Activated CD4-positive, alpha-beta T cell treated with anti-CD3 and anti-CD28 coated beads for 36 hours (primary cell): ENCODE measurements at regions of chr15 and their contacts with region 1.

Region 1: DNA sequence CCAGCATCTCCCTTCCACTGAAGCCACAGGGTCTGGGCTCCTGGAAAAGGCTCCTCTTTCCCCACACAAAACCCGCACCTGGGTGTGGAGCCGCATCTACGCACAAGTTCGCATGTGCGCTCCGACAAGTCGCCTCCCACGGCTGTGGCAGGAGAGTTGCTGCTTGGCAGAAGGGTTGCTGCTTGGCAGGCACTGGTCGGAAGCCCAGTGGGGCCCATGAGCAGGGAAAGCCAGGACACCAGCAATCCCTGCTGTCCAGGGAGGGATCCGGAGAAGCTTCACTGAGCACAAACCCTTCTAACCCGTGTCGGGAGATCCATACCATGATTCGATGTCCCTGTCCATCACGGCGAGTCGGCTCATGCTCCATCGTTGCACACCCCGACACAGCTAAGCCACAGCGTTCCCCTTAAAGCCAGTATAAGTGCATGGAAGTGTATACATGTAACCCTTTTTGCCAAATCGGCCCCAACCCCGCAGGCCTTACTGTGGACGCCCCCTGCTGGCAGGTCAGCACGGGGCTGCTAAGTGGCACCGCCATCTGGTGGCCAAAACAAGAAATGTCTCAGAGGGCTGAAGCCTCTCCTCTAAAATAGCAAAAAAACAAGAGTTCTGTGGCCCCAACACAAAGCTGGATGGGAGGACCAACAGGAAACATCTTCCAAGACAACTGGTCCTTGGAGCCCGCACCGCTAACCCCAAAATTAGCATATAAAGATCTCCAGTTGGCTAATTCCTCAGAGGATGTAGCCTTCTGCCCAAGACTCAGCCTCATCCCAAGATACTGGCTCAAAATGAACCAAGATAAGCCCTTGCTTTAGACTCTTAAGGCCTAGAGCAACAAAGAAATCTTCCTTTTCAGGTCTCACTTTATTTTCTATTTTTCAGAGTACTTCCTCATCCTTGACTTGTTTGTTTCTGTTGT is 8.3 kb downstream of the ANKRD63 start:
- DNase-seq: peak; percentile 93
- ATAC-seq: peak; percentile 79
- H3K4me3 Mint-ChIP-seq: no peak overlapping the region
- H3K27ac Mint-ChIP-seq: no peak overlapping the region
- H3K4me1 Mint-ChIP-seq: no peaks in the 10 kb centered on the region
- H3K27me3 Mint-ChIP-seq: peaks cover 14% of the 10 kb centered on the region

Region 2: GRCh38 chr15:40032125-40032839 is 242.3 kb before region 1 on chr15:
- CTCF ChIA-PET with region 1: interaction called, 27 read pairs
- POLR2A ChIA-PET with region 1: no interaction called
- intact Hi-C with region 1: no loop called
- DNase-seq: no peak
- ATAC-seq: no peak
- H3K4me3 Mint-ChIP-seq: no peak overlapping the region
- H3K27ac Mint-ChIP-seq: peak overlapping the region; percentile 24
- H3K4me1 Mint-ChIP-seq: peaks cover 22% of the 10 kb centered on the region
- H3K27me3 Mint-ChIP-seq: no peaks in the 10 kb centered on the region

Region 3: DNA sequence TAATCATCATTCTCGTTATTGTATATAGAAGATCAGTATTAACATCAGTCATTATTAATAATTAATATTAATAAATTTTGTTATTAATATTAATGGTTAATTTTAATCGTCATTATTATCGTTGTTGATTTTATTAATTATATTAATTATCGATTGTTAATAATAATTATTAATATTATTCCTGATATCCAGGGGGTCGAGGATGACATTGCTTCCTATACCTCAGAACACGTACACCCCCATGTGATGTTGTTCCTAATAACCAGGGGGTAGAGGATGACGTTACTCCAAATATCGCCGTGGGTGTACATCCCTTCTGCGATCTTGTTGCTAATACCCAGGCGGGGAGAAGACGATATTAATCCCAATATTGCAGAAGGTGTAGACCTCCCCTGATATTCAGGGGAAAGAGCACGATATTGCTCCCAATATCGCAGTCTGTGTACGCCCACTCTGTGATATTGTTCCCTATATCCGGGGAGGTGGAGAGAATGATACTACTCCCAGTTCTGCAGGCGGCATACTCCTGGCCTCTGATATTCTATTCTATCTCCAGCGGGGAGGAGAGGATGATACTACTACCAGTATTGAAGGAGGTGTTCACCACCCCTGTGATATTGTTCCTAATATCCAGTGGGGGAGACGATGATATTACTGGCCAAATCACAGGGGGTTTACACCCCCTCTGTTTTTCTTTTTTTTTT is 143.7 kb before region 1 on chr15:
- CTCF ChIA-PET with region 1: no interaction called
- POLR2A ChIA-PET with region 1: no interaction called
- intact Hi-C with region 1: no loop called
- DNase-seq: no peak
- ATAC-seq: peak; percentile 13
- H3K4me3 Mint-ChIP-seq: no peak overlapping the region
- H3K27ac Mint-ChIP-seq: no peak overlapping the region
- H3K4me1 Mint-ChIP-seq: no peaks in the 10 kb centered on the region
- H3K27me3 Mint-ChIP-seq: no peaks in the 10 kb centered on the region

Region 4: DNA sequence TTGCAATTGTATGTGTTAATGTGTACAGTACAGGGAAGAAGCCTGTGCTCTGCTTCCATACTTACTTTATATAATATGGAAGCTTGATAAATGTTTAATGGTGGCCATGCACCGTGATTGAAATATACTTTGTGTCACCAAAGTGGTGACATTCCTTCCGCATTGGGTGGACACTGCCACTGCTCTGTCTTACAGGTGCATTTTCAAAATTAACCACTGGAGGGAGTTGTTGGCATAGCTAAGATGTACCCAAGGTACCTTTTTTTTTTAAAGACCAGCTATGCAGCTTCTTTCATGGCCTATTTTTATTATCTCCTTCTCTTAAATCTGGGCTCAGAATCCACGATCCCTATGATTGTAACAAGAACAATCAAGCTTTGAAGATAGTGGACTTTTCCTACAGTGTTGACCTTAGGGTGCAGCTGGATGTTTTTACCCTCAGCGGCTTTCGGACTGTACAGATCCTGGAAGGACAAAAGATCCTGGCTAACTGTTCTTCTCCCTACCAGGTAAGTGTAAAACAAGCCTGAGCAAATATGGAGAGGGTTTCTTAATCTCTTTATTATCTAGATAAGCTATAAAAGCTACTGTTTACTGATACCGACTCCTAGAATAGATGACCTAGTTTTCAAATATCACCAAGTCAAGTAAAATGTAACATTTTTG is 57.3 kb before region 1 on chr15:
- CTCF ChIA-PET with region 1: interaction called, 146 read pairs
- POLR2A ChIA-PET with region 1: no interaction called
- intact Hi-C with region 1: loop called (anchors 1 kb)
- DNase-seq: peak; percentile 50
- ATAC-seq: peak; percentile 91
- H3K4me3 Mint-ChIP-seq: no peak overlapping the region
- H3K27ac Mint-ChIP-seq: no peak overlapping the region
- H3K4me1 Mint-ChIP-seq: no peaks in the 10 kb centered on the region
- H3K27me3 Mint-ChIP-seq: no peaks in the 10 kb centered on the region

Region 5: GRCh38 chr15:40256638-40257235 is 17.9 kb before region 1 on chr15:
- CTCF ChIA-PET with region 1: interaction called, 42 read pairs
- POLR2A ChIA-PET with region 1: no interaction called
- intact Hi-C with region 1: no loop called
- DNase-seq: no peak
- ATAC-seq: peak; percentile 66
- H3K4me3 Mint-ChIP-seq: no peak overlapping the region
- H3K27ac Mint-ChIP-seq: no peak overlapping the region
- H3K4me1 Mint-ChIP-seq: peaks cover 6% of the 10 kb centered on the region
- H3K27me3 Mint-ChIP-seq: peaks cover 16% of the 10 kb centered on the region

Region 6: DNA sequence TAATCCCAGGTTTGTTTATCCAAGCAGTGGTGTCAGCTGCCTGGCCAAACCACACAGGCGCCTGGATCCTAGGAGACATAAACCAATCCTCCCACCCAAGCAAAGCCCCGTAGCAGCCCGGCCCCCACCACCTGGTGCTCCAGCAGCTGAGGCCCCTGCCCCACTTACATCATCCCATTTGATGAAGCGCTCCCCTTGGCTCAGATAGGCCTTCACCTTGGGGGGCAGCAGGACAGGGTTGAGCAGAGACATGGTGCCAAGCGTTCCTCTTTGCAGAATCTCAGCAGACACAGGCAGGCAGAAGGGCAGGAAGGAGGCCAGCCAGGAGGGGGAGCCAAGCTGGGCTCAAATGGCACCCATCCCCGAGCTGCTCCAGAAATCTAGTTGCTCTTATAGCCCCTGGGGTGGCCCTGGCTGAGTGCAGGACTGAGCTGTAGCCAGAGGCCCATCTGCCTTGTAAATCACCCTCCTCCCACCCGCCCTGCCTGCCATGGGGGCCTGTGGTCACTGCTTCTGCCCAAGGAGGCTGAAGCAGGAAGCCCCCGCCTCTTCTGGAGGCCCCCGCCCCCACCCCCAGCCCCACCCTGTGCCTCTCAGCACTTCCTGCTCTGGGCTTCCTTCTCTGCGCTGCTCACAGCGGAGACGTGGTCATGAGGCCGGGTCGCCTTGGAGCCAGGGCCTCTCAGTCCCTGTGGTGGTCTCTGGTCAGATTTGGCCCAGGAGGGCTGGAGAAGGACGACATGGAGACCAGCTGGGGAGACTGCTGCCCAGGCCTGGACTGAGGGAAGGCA is 33.0 kb after region 1 on chr15 and contains the start of gene PLCB2:
- CTCF ChIA-PET with region 1: interaction called, 393 read pairs
- POLR2A ChIA-PET with region 1: interaction called, 3 read pairs
- intact Hi-C with region 1: loop called (anchors 1 kb)
- DNase-seq: peak; percentile 83
- ATAC-seq: peak; percentile 79
- H3K4me3 Mint-ChIP-seq: peak within 1 kb of the TSS; percentile 91
- H3K27ac Mint-ChIP-seq: peak within 1 kb of the TSS; percentile 97
- H3K4me1 Mint-ChIP-seq: peaks cover 31% of the 10 kb centered on the region
- H3K27me3 Mint-ChIP-seq: no peaks in the 10 kb centered on the region
- total RNA-seq, gene PLCB2: 67.9 to 86.8 TPM

Region 7: DNA sequence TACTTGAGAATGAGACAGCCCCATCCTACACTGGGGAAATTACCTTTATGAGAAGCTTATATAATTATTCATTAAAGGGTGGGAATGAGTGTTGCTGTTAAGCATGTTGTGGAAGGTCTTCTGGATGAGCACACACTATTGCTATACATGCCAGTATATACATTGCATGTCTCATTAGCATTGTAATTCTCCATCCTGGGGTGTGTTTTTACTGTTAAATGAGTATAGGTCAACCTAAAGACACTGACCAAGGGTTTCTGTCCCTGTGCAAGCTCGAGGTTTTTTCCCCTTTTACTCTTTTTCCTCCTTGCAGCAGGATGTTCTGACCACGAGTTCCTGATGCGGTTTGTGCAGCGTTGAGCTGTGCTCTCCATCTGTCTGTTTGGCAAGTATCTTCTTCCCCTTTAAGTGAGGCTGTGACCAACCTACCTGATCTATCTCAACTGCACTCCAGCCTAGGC is 123.8 kb after region 1 on chr15:
- CTCF ChIA-PET with region 1: interaction called, 10 read pairs
- POLR2A ChIA-PET with region 1: no interaction called
- intact Hi-C with region 1: no loop called
- DNase-seq: peak; percentile 69
- ATAC-seq: peak; percentile 93
- H3K4me3 Mint-ChIP-seq: peak overlapping the region; percentile 3
- H3K27ac Mint-ChIP-seq: peak overlapping the region; percentile 65
- H3K4me1 Mint-ChIP-seq: peaks cover 22% of the 10 kb centered on the region
- H3K27me3 Mint-ChIP-seq: no peaks in the 10 kb centered on the region

Region 8: GRCh38 chr15:40873625-40874561 is 599.3 kb after region 1 on chr15 and contains the start of gene RHOV:
- CTCF ChIA-PET with region 1: no interaction called
- POLR2A ChIA-PET with region 1: no interaction called
- intact Hi-C with region 1: no loop called
- DNase-seq: peak; percentile 74
- ATAC-seq: peak; percentile 80
- H3K4me3 Mint-ChIP-seq: peak within 1 kb of the TSS; percentile 70
- H3K27ac Mint-ChIP-seq: no peak within 1 kb of the TSS
- H3K4me1 Mint-ChIP-seq: peaks cover 26% of the 10 kb centered on the region
- H3K27me3 Mint-ChIP-seq: peaks cover 3% of the 10 kb centered on the region
- total RNA-seq, gene RHOV: 0.25 to 0.41 TPM